Left lung (tissue), 14 donors: ENCODE measurements at regions of chr6 and their contacts with region 1.

Region 1: GRCh38 chr6:73329201-73329600 is 24.9 kb downstream of the DPPA5 start:
- DNase-seq: no peak
- ATAC-seq: no peak
- H3K4me3 ChIP-seq: no peak overlapping the region
- H3K27ac ChIP-seq: no peak overlapping the region
- H3K4me1 ChIP-seq: no peaks in the 10 kb centered on the region
- H3K27me3 ChIP-seq: peaks cover 0 to 38% of the 10 kb centered on the region in 2 donors
- CTCF ChIP-seq: no peak

Region 2: DNA sequence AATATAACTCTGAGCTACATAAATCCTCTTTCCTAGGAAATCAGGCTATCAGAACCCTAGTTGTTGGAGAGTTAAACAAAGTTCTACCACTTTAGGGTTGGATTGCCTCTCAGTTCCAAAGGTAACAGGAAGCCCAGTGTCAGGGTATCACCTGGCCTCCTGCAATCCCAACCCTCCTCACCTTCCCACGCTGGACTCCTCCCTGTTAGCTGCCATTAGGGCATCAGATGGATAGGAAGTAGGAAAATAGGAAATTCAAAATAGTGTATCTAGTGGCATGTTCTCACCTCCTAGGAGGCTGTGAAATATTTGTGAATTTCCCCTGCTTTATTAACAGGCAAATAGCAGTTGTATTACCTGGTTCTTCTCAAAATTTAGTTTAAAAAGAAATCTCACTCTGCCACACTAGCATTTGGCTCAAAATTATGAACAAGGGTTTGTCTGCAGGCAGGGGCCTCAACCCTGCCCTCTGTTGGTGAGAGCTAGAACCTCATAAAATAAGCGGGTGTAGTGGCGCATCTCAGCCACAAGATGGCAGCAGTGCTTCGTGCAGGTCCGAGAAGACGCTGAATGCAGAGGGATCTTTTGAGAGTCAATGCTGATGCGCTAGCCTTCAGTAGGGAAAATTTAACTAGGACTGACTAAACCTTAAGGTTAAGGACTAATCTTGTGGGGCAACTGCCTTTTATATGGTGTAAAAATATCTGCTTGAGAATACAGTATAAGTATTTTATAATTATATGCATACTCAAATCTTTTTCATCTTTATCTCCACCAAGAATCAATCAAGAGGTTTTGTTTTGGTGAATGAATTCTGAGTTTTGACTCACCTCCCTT is 917.1 kb before region 1 on chr6:
- intact Hi-C with region 1: loop called in 1 of 2 experiments (anchors 10 kb)
- DNase-seq: peak; percentile 61 to 89 (median 82)
- ATAC-seq: peak; percentile 100
- H3K4me3 ChIP-seq: no peak overlapping the region
- H3K27ac ChIP-seq: no peak overlapping the region
- H3K4me1 ChIP-seq: no peaks in the 10 kb centered on the region
- H3K27me3 ChIP-seq: peaks cover 0 to 18% of the 10 kb centered on the region in 2 donors
- CTCF ChIP-seq: peak; percentile 97 to 100

Region 3: GRCh38 chr6:73121421-73121993 is 207.7 kb before region 1 on chr6:
- intact Hi-C with region 1: no loop called
- DNase-seq: peak in 1 of 4 donors; percentile 2
- ATAC-seq: no peak
- H3K4me3 ChIP-seq: no peak overlapping the region
- H3K27ac ChIP-seq: no peak overlapping the region
- H3K4me1 ChIP-seq: no peaks in the 10 kb centered on the region
- H3K27me3 ChIP-seq: no peaks in the 10 kb centered on the region
- CTCF ChIP-seq: no peak